GM12878 (cell line): ENCODE measurements at regions of chr15 and their contacts with region 1.

Region 1: DNA sequence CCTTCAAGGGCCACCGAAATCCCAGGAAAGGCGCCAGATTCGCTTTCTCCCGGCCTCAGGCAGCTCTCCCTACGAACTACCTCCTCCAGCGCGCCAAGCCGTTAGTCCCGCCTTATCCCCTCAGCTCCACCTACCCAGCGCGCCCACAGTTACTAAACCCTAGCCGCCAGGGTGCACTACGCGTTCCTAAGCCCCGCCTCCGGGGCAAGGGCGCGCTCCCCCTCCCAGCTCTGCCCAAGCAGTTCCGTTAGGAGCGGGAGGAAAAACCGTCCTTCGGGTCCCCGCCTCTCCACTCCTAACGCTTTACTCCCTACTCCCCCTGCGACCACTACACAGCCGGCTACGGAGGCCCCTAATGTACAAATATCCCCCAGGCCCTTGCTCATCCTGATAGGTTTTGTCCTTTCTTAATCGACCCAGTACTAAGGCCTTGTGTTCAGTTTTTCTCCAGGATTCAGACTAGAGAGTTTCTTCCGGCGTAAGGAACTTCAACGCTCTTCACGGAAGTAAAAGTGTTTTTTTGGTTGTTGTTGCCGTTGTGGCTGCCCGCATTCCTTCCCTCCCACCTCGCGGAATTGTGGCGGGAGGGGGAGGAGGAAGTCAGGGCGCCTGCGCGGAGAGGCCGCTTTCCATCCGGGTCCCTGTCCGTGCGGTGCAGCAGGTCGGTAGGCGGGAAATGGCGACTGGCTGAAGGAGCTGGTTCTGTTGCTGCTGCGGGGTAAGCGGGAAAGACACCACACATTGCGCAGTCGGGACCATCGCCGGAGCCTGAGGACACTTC is at the start of gene CTDSPL2:
- DNase-seq: peak; percentile 91
- ATAC-seq: peak; percentile 97
- H3K4me3 ChIP-seq: peak within 1 kb of the TSS; percentile 80
- H3K27ac ChIP-seq: peak within 1 kb of the TSS; percentile 93
- H3K4me1 ChIP-seq: no peaks in the 10 kb centered on the region
- H3K27me3 ChIP-seq: no peaks in the 10 kb centered on the region
- CTCF ChIP-seq: peak; percentile 24 to 39 (median 37); a peak in 5 of 6 replicates
- EP300 ChIP-seq: 0 out of 4 replicates have a peak, but pooled peaks of 1 of the 2 experiments have one; percentile 13
- POLR2A ChIP-seq: peak; percentile 93
- RAD21 ChIP-seq: no peak
- polyA plus RNA-seq, gene CTDSPL2: 10.7 to 14.3 TPM

Region 2: GRCh38 chr15:44286814-44287452 is 140.2 kb before region 1 on chr15:
- CTCF ChIA-PET with region 1: no interaction called
- POLR2A ChIA-PET with region 1: interaction called, 7 read pairs
- RAD21 ChIA-PET with region 1: interaction called, 9 read pairs
- SMC1A ChIA-PET with region 1: interaction called, 3 read pairs
- in situ Hi-C with region 1: no loop called
- intact Hi-C with region 1: loop called (anchors 5 kb)
- DNase-seq: no peak
- ATAC-seq: no peak
- H3K4me3 ChIP-seq: peak overlapping the region; percentile 96
- H3K27ac ChIP-seq: peak overlapping the region; percentile 97; the same call in 1 of the 2 replicates
- H3K4me1 ChIP-seq: peaks cover 3% of the 10 kb centered on the region; the same call in 1 of the 2 replicates
- H3K27me3 ChIP-seq: no peaks in the 10 kb centered on the region
- CTCF ChIP-seq: no peak
- EP300 ChIP-seq: no peak
- POLR2A ChIP-seq: no peak
- RAD21 ChIP-seq: no peak

Region 3: GRCh38 chr15:44385344-44385942 is 41.7 kb before region 1 on chr15:
- CTCF ChIA-PET with region 1: interaction called, 3 read pairs
- POLR2A ChIA-PET with region 1: interaction called, 5 read pairs
- RAD21 ChIA-PET with region 1: interaction called, 10 read pairs
- SMC1A ChIA-PET with region 1: interaction called, 9 read pairs
- in situ Hi-C with region 1: no loop called
- intact Hi-C with region 1: no loop called
- DNase-seq: no peak
- ATAC-seq: peak; percentile 83
- H3K4me3 ChIP-seq: 0 out of 2 replicates have a peak overlapping the region, but pooled peaks have one; percentile 29
- H3K27ac ChIP-seq: peak overlapping the region; percentile 78
- H3K4me1 ChIP-seq: peaks cover 7% of the 10 kb centered on the region; the same call in 1 of the 2 replicates
- H3K27me3 ChIP-seq: no peaks in the 10 kb centered on the region
- CTCF ChIP-seq: no peak
- EP300 ChIP-seq: no peak
- POLR2A ChIP-seq: no peak
- RAD21 ChIP-seq: no peak

Region 4: DNA sequence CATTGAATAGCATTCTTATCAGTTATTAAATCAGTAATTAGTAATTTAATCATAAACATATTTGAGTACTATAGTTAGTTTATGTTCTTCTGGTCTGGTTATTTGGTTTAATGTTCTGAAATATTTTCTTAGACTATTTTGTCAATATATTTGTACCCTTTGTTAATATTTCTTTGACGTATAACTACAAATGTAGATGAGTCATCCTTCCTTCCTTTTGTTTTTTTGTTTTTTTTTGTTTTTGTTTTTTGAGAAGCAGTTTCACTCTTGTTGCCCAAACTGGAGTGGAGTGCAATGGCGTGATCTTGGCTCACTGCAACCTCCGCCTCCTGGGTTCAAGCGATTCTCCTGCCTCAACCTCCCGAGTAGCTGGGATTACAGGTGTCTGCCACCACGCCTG is 92.4 kb after region 1 on chr15:
- CTCF ChIA-PET with region 1: no interaction called
- POLR2A ChIA-PET with region 1: no interaction called
- RAD21 ChIA-PET with region 1: no interaction called
- SMC1A ChIA-PET with region 1: no interaction called
- in situ Hi-C with region 1: no loop called
- intact Hi-C with region 1: no loop called
- DNase-seq: no peak
- ATAC-seq: no peak
- H3K4me3 ChIP-seq: no peak overlapping the region
- H3K27ac ChIP-seq: no peak overlapping the region
- H3K4me1 ChIP-seq: no peaks in the 10 kb centered on the region
- H3K27me3 ChIP-seq: no peaks in the 10 kb centered on the region
- CTCF ChIP-seq: no peak
- EP300 ChIP-seq: no peak
- POLR2A ChIP-seq: no peak
- RAD21 ChIP-seq: no peak

Region 5: DNA sequence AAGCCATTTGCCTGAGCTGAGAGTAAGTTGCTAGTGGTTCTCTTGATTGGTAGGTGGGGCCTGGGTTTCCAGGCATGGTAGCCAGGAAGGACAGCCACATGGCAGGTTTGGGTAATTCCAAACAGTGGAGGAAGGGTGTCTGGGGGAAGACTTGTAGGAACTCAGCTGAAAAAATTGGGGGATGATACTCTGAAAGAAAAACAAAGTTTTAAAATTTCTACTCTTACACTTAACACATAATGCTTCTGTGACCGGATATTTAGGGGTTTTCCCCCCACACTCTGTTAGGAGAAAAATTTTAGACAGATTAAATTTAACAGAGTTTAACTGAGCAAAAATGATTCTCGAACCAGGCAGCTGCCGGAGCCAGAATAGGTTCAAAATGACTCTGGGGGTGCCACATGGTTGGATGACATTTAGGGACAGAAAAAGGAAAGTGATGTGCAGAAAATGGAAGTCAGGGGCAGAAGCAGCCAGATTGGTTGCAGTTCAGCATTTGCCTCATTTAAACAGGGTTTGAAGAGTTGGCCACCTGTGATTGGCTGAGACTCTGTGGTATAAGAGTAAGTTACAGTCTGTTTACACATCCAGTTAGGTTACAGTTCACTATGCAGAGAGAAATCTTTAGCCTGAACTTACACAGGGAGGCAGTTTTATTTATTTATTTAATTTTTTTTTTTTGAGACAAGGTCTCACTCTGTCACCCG is 292.3 kb after region 1 on chr15:
- CTCF ChIA-PET with region 1: no interaction called
- POLR2A ChIA-PET with region 1: no interaction called
- RAD21 ChIA-PET with region 1: no interaction called
- SMC1A ChIA-PET with region 1: no interaction called
- in situ Hi-C with region 1: no loop called
- intact Hi-C with region 1: no loop called
- DNase-seq: peak; percentile 91
- ATAC-seq: peak; percentile 62
- H3K4me3 ChIP-seq: no peak overlapping the region
- H3K27ac ChIP-seq: peak overlapping the region; percentile 83
- H3K4me1 ChIP-seq: peaks cover 79% of the 10 kb centered on the region
- H3K27me3 ChIP-seq: no peaks in the 10 kb centered on the region
- CTCF ChIP-seq: no peak
- EP300 ChIP-seq: peak in 1 of 2 experiments; percentile 59; a peak in 1 of 4 replicates
- POLR2A ChIP-seq: peak; percentile 86
- RAD21 ChIP-seq: 0 out of 2 replicates have a peak, but pooled peaks have one; percentile 0